Naive thymus-derived CD4-positive, alpha-beta T cell (primary cell): ENCODE measurements at regions of chr15 and their contacts with region 1.

Region 1: DNA sequence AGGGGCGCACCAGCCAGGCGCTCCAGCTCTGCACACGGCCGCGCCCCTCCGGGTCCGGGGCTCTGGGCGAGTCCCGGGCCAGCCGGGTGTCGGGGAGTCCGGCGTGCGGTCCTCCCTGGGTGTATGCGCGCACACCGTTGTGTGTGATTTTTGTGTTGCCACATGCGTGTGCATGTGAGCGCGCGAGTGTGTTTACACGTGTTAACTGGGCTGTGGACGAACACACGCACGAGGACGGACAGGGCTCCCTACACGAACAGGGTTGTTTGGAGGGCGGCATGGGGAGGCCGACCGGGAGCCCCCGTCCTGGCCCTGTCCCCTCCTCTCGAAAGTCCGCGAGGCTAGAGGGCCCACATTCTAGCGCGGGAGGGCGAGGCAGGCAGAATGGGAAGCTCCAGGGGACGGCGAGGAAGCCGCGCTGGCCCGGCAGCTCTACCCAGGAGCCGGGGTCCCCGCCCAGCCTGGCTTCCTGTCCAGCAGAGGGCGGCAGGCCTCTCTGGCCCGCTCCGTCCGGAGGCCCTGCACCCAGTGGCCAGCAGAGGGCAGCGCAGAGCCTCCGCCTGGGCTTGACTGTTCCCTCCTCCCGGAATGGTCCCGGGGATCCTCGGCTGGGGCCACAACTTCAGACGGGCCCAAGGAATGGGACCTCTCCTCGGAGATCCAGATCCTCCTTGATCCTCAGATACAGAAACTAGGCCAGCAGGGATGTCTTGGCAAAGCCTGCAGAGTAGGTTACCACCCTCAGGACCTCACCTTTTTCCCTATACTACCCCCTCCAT is 611 bp upstream of the LINGO1 start:
- DNase-seq: peak in 7 of 9 donors; percentile 6 to 77 (median 19)
- ATAC-seq: peak; percentile 86
- H3K4me3 ChIP-seq: no peak overlapping the region
- H3K4me3 Mint-ChIP-seq: peak overlapping the region; percentile 20 to 84 (median 70)
- H3K27ac ChIP-seq: no peak overlapping the region
- H3K27ac Mint-ChIP-seq: no peak overlapping the region
- H3K4me1 ChIP-seq: peaks cover 0 to 9% of the 10 kb centered on the region in 2 donors
- H3K4me1 Mint-ChIP-seq: peaks cover 6 to 20% (median 13%) of the 10 kb centered on the region in 7 donors
- H3K27me3 ChIP-seq: peaks cover 0 to 18% of the 10 kb centered on the region in 2 donors
- H3K27me3 Mint-ChIP-seq: peaks cover 28 to 61% (median 45%) of the 10 kb centered on the region in 5 donors

Region 2: GRCh38 chr15:76840830-76841460 is 792.4 kb before region 1 on chr15:
- CTCF ChIA-PET with region 1: no interaction called
- POLR2A ChIA-PET with region 1: no interaction called
- intact Hi-C with region 1: no loop called
- DNase-seq: peak in 2 of 9 donors; percentile 1 to 11
- ATAC-seq: no peak
- H3K4me3 ChIP-seq: no peak overlapping the region
- H3K4me3 Mint-ChIP-seq: no peak overlapping the region
- H3K27ac ChIP-seq: no peak overlapping the region
- H3K27ac Mint-ChIP-seq: peak overlapping the region in 1 of 9 donors; percentile 17
- H3K4me1 ChIP-seq: no peaks in the 10 kb centered on the region
- H3K4me1 Mint-ChIP-seq: peaks cover 4 to 36% (median 28%) of the 10 kb centered on the region in 7 donors
- H3K27me3 ChIP-seq: no peaks in the 10 kb centered on the region
- H3K27me3 Mint-ChIP-seq: no peaks in the 10 kb centered on the region

Region 3: DNA sequence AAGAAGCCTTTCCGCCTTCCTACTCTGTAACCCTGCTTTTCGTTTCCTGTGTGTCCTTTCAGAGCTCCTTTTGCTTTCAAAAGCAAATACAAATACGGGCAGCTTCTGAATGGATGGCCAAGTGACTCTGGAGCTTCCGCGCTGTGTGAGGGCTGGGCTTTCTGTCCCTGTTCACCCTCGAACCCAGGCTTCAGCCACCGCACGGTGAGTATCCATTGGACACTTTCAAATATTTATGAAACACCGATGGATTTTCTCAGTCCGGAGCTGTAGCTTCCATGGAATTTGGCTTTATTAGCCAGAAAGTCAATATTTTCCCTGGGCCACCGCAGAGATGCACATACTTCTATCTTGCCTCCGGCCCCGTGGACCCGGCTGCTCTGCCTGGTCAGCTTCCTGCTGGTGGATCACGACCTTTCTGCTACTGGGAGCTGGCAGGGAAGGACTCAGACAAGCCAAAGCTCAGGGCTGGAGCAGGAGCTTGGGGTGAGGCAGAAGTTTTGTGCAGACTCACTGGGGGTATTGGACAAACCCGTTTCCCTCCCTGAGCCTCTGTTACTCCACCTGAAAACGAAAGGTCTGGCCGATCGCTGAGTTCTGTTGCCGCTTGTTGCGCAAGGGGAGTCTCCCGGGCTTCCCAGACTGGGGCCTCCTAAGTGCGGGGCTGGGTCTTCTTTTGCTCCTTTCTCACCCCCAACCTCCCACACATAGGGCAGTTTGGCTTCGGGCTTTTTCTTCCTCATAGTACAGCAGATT is 64.2 kb before region 1 on chr15:
- CTCF ChIA-PET with region 1: no interaction called
- POLR2A ChIA-PET with region 1: no interaction called
- intact Hi-C with region 1: no loop called
- DNase-seq: no peak
- ATAC-seq: no peak
- H3K4me3 ChIP-seq: no peak overlapping the region
- H3K4me3 Mint-ChIP-seq: peak overlapping the region in 1 of 10 donors; percentile 3
- H3K27ac ChIP-seq: no peak overlapping the region
- H3K27ac Mint-ChIP-seq: peak overlapping the region in 1 of 9 donors; percentile 13
- H3K4me1 ChIP-seq: no peaks in the 10 kb centered on the region
- H3K4me1 Mint-ChIP-seq: peaks cover 0 to 6% (median 0%) of the 10 kb centered on the region in 7 donors
- H3K27me3 ChIP-seq: no peaks in the 10 kb centered on the region
- H3K27me3 Mint-ChIP-seq: peaks cover 0 to 4% (median 0%) of the 10 kb centered on the region in 5 donors

Region 4: GRCh38 chr15:77821188-77821958 is 188.1 kb after region 1 on chr15:
- CTCF ChIA-PET with region 1: no interaction called
- POLR2A ChIA-PET with region 1: no interaction called
- intact Hi-C with region 1: loop called in 1 of 2 experiments (anchors 1 kb)
- DNase-seq: peak in 2 of 9 donors; percentile 4 to 34
- ATAC-seq: no peak
- H3K4me3 ChIP-seq: no peak overlapping the region
- H3K4me3 Mint-ChIP-seq: peak overlapping the region in 2 of 10 donors; percentile 13 to 60
- H3K27ac ChIP-seq: no peak overlapping the region
- H3K27ac Mint-ChIP-seq: no peak overlapping the region
- H3K4me1 ChIP-seq: no peaks in the 10 kb centered on the region
- H3K4me1 Mint-ChIP-seq: peaks cover 0 to 15% (median 4%) of the 10 kb centered on the region in 7 donors
- H3K27me3 ChIP-seq: no peaks in the 10 kb centered on the region
- H3K27me3 Mint-ChIP-seq: peaks cover 37 to 54% (median 48%) of the 10 kb centered on the region in 5 donors

Region 5: DNA sequence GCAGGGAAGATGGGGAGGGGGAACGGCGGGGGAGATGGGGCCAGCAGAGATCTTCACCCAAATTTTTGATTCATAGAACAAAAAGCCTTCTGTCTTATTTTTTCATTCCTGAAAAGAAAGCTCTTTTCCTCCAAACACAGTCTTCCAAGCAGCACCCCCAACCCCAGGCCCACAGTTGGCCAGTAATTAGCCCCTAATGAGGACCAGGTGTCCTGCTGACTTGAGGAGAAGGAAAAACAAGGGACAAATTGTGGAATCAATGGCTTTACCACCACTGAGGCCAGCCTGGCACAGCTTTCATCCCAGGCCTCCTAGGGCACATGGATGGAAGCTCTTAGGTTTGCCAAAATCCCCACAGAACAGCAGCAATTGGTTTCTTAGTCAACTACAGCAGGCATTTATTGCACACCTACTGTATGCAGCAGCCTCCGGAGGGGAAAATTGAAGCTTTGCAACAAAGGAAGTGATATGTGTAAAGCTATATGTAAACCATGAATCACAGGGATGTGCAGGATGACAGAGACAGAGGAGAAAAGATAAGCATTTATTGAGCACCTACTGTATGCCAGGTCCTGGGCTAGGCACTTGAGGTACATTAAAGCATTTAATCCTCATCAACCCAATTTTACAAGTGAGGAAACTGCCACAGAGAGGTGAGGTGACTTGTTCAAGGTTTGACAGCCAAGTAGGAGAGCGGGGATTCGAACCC is 244.7 kb after region 1 on chr15:
- CTCF ChIA-PET with region 1: no interaction called
- POLR2A ChIA-PET with region 1: no interaction called
- intact Hi-C with region 1: loop called in 1 of 2 experiments (anchors 5 kb)
- DNase-seq: no peak
- ATAC-seq: no peak
- H3K4me3 ChIP-seq: no peak overlapping the region
- H3K4me3 Mint-ChIP-seq: no peak overlapping the region
- H3K27ac ChIP-seq: no peak overlapping the region
- H3K27ac Mint-ChIP-seq: no peak overlapping the region
- H3K4me1 ChIP-seq: no peaks in the 10 kb centered on the region
- H3K4me1 Mint-ChIP-seq: peaks cover 0 to 1% (median 0%) of the 10 kb centered on the region in 7 donors
- H3K27me3 ChIP-seq: no peaks in the 10 kb centered on the region
- H3K27me3 Mint-ChIP-seq: no peaks in the 10 kb centered on the region